GM12878 (cell line): ENCODE measurements at regions of chr5 and their contacts with region 1.

Region 1: DNA sequence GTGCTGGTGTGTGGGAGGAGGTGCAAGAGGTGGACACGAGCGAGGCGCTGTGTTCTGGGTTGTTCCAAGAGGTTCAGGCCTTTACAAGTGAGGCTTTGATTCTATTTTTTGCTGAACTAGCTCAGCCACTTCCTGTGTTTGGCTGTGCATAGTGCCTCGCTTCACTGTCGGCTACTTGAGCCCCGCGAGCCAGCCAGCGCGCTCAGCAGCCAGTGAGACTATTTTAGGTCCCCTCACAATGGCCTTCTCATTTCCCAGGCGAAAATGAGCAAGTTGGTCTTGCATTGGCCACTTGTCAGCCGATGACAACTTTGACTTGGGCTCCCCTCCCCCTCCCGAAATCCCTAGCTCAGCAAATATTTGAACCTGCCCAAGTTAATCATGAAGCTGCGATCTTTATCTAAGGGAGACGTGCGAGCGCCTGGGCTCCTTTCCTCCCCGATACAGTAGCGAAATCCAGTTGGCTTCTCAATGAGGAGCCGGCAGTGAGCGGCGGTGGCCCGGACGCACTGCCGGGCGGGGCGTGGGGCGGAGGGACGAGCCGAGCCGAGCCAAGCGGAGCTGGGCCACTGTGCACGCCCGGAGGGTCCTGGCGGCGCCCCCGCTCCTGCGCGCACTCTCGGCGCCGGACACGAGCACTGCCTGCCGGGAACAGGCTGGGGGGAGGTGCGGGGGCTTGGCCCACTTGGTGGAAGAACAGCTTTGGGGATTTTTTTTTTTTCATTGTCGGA is 72.6 kb downstream of the PIK3R1 start:
- DNase-seq: peak; percentile 77
- ATAC-seq: peak; percentile 85
- H3K4me3 ChIP-seq: peak overlapping the region; percentile 77
- H3K27ac ChIP-seq: peak overlapping the region; percentile 94
- H3K4me1 ChIP-seq: peaks cover 53% of the 10 kb centered on the region
- H3K27me3 ChIP-seq: no peaks in the 10 kb centered on the region
- CTCF ChIP-seq: no peak
- EP300 ChIP-seq: peak; percentile 16 to 52; a peak in 1 of 4 replicates
- POLR2A ChIP-seq: peak; percentile 78
- RAD21 ChIP-seq: 0 out of 2 replicates have a peak, but pooled peaks have one; percentile 9

Region 2: GRCh38 chr5:68303038-68303738 is 15.0 kb after region 1 on chr5:
- CTCF ChIA-PET with region 1: interaction called, 14 read pairs
- POLR2A ChIA-PET with region 1: interaction called, 8 read pairs
- RAD21 ChIA-PET with region 1: interaction called, 30 read pairs
- SMC1A ChIA-PET with region 1: interaction called, 63 read pairs
- in situ Hi-C with region 1: no loop called
- intact Hi-C with region 1: no loop called
- DNase-seq: peak; percentile 55
- ATAC-seq: peak; percentile 73
- H3K4me3 ChIP-seq: no peak overlapping the region
- H3K27ac ChIP-seq: no peak overlapping the region
- H3K4me1 ChIP-seq: peaks cover 13% of the 10 kb centered on the region; the same call in 1 of the 2 replicates
- H3K27me3 ChIP-seq: no peaks in the 10 kb centered on the region
- CTCF ChIP-seq: no peak
- EP300 ChIP-seq: no peak
- POLR2A ChIP-seq: no peak
- RAD21 ChIP-seq: no peak

Region 3: DNA sequence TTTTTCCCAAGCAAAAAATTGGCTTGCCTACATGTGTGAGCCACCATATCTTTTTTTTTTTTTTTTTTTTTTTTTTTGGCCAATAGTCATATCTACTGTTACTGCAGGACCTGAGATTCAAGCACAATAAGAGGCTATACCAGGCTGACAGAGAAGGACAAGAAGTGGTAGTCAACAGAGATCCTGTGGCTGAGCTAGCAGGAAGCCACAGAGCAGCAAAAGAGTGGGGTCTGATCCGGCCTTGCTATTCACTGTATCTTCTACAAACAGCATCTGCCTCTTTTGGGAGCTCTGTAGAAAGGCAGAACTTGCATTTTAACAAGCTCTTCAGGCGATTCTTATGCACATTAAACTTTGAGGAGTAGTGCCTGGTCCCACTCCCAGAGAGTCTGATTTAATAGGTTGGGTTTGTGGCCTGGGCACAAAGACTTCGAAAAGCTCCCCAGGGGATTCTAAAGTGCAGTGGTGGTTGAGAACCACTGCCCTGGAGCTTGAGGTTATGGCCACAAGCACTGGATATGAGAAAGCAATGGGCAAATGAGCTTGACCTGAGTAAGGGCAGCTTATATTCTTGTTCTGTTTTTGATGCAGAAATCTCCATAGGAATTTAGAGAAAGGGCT is 90.2 kb after region 1 on chr5:
- CTCF ChIA-PET with region 1: interaction called, 10 read pairs
- POLR2A ChIA-PET with region 1: no interaction called
- RAD21 ChIA-PET with region 1: interaction called, 22 read pairs
- SMC1A ChIA-PET with region 1: interaction called, 21 read pairs
- in situ Hi-C with region 1: no loop called
- intact Hi-C with region 1: no loop called
- DNase-seq: peak; percentile 55
- ATAC-seq: peak; percentile 90
- H3K4me3 ChIP-seq: no peak overlapping the region
- H3K27ac ChIP-seq: peak overlapping the region; percentile 15; the same call in 1 of the 2 replicates
- H3K4me1 ChIP-seq: peaks cover 22% of the 10 kb centered on the region
- H3K27me3 ChIP-seq: no peaks in the 10 kb centered on the region; a peak in 1 of 4 replicates
- CTCF ChIP-seq: no peak
- EP300 ChIP-seq: no peak
- POLR2A ChIP-seq: no peak
- RAD21 ChIP-seq: no peak

Region 4: DNA sequence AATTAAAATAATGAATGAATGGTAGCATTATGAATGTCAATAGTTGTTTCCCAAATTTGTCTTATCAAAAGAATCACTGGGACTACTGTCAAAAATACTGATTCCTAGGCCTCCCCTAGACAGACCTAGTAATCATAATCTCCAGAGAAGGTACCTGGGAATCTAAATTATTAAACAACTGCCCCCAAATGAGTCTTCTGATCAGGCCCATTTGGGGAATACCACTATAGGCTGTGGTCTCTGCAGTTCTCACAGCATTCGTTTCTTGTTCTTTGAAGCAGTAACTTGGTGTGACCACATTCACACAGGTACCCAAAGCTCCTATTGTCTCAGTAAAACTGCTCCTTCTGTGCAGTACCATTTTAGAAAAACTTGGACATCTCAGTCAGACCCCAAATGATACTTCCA is 158.3 kb after region 1 on chr5:
- CTCF ChIA-PET with region 1: interaction called, 57 read pairs
- POLR2A ChIA-PET with region 1: interaction called, 8 read pairs
- RAD21 ChIA-PET with region 1: interaction called, 185 read pairs
- SMC1A ChIA-PET with region 1: interaction called, 137 read pairs
- in situ Hi-C with region 1: no loop called
- intact Hi-C with region 1: no loop called
- DNase-seq: peak; percentile 87
- ATAC-seq: peak; percentile 94
- H3K4me3 ChIP-seq: no peak overlapping the region
- H3K27ac ChIP-seq: peak overlapping the region; percentile 77
- H3K4me1 ChIP-seq: peaks cover 21% of the 10 kb centered on the region
- H3K27me3 ChIP-seq: no peaks in the 10 kb centered on the region
- CTCF ChIP-seq: no peak
- EP300 ChIP-seq: peak; percentile 60 to 84; a peak in 3 of 4 replicates
- POLR2A ChIP-seq: no peak
- RAD21 ChIP-seq: peak; percentile 34

Region 5: DNA sequence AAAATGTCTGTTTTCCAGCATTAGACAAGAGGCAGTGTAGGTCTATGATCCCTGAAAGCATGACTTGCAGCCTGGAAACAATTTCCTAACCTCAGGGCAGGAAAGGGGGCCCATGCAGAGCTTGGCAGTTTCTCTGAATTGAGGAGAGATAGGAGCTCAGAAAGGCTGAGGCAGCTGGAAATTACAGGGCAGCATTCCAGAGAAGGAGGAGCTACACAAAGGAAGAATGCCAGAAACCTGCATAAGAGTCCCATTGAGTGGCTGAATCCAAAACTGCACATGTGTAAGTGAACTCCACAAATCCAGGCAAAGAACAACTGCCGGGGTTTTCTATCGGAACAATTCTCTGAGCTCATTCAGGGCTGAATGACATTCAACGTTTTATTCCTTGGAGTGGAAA is 274.2 kb after region 1 on chr5:
- CTCF ChIA-PET with region 1: interaction called, 7 read pairs
- POLR2A ChIA-PET with region 1: interaction called, 3 read pairs
- RAD21 ChIA-PET with region 1: no interaction called
- SMC1A ChIA-PET with region 1: interaction called, 11 read pairs
- in situ Hi-C with region 1: no loop called
- intact Hi-C with region 1: loop called (anchors 5 kb)
- DNase-seq: no peak
- ATAC-seq: no peak
- H3K4me3 ChIP-seq: no peak overlapping the region
- H3K27ac ChIP-seq: no peak overlapping the region
- H3K4me1 ChIP-seq: peaks cover 6% of the 10 kb centered on the region; the same call in 1 of the 2 replicates
- H3K27me3 ChIP-seq: no peaks in the 10 kb centered on the region
- CTCF ChIP-seq: no peak
- EP300 ChIP-seq: no peak
- POLR2A ChIP-seq: no peak
- RAD21 ChIP-seq: no peak

Region 6: GRCh38 chr5:68962757-68963484 is 674.8 kb after region 1 on chr5:
- CTCF ChIA-PET with region 1: interaction called, 10 read pairs
- POLR2A ChIA-PET with region 1: no interaction called
- RAD21 ChIA-PET with region 1: interaction called, 7 read pairs
- SMC1A ChIA-PET with region 1: interaction called, 3 read pairs
- in situ Hi-C with region 1: no loop called
- intact Hi-C with region 1: loop called (anchors 2 kb)
- DNase-seq: no peak
- ATAC-seq: peak; percentile 66
- H3K4me3 ChIP-seq: no peak overlapping the region
- H3K27ac ChIP-seq: no peak overlapping the region
- H3K4me1 ChIP-seq: no peaks in the 10 kb centered on the region
- H3K27me3 ChIP-seq: no peaks in the 10 kb centered on the region
- CTCF ChIP-seq: peak; percentile 38 to 62 (median 62); a peak in 5 of 6 replicates
- EP300 ChIP-seq: no peak
- POLR2A ChIP-seq: no peak
- RAD21 ChIP-seq: peak; percentile 73